ENCODE measurements at regions of chr4 and their contacts with region 1.

Region 1: GRCh38 chr4:97987019-97987648 is 156.1 kb downstream of the STPG2 start:
- DNase-seq: peak; percentile 71
- H3K4me3 ChIP-seq: no peak overlapping the region
- H3K27ac ChIP-seq: no peak overlapping the region
- H3K4me1 ChIP-seq: no peaks in the 10 kb centered on the region
- H3K27me3 ChIP-seq: no peaks in the 10 kb centered on the region
- CTCF ChIP-seq: peak; percentile 33 to 48
- POLR2A ChIP-seq: no peak

Region 2: DNA sequence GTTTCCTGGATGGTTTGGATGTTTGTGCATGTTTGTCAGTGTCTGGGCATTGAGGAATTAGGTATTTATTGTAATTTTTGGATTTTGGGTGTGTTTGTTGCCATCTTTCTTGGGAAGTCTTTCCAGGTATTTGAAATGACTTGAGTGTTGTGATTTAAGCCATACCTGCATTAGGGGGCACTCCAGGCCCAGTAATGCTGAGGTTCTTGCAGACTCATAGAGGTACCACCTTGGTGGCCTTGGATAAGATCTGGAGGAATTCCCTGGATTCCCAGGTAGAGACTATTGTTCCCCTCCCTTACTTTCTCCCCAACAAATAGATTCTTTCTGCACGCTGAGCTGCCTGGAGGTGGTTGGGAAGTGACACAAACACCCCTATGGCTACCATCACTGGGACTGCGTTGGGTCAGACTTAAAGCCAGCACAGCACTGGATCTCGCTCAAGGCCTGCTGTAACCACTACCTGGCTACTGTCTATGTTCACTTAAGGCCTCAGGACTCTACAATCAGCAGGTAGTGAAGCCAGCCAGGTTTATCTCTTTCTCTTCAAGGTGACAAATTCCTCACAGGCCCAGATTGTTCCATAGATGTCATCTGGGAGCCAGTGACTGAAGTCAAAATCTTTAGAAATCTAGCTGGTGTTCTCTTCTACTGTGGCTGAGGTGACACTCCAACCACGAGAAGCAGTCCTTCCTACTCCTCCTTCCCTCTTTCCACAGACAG is 1503.7 kb before region 1 on chr4:
- CTCF ChIA-PET with region 1: interaction called, 5 read pairs
- POLR2A ChIA-PET with region 1: no interaction called
- dilution Hi-C with region 1: no loop called
- intact Hi-C with region 1: loop called (anchors 5 kb)
- DNase-seq: peak; percentile 2
- H3K4me3 ChIP-seq: no peak overlapping the region
- H3K27ac ChIP-seq: no peak overlapping the region
- H3K4me1 ChIP-seq: no peaks in the 10 kb centered on the region
- H3K27me3 ChIP-seq: no peaks in the 10 kb centered on the region
- CTCF ChIP-seq: no peak
- POLR2A ChIP-seq: no peak

Region 3: DNA sequence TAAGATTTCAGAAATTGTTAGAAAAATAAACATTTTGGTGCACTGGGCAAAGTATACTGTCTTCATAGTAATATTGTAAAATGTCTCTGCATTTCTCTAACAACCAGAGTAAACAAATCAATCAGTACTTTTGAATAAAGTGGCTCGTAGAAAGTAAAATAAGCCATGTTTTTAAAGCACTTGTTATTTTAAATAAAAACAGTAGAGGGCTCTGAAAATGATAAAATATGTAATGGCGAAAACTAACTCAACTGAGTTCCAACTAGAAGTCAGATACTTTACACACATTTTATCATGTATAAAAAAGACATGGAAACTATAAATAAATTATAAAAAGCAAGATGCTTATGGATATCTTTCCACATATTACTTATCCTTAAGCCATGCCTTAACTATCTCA is 1012.8 kb before region 1 on chr4:
- CTCF ChIA-PET with region 1: no interaction called
- POLR2A ChIA-PET with region 1: no interaction called
- dilution Hi-C with region 1: no loop called
- intact Hi-C with region 1: loop called (anchors 10 kb)
- DNase-seq: no peak
- H3K4me3 ChIP-seq: no peak overlapping the region
- H3K27ac ChIP-seq: no peak overlapping the region
- H3K4me1 ChIP-seq: no peaks in the 10 kb centered on the region
- H3K27me3 ChIP-seq: no peaks in the 10 kb centered on the region
- CTCF ChIP-seq: no peak
- POLR2A ChIP-seq: no peak

Region 4: GRCh38 chr4:97159648-97160047 is 827.5 kb before region 1 on chr4:
- CTCF ChIA-PET with region 1: interaction called, 8 read pairs
- POLR2A ChIA-PET with region 1: no interaction called
- dilution Hi-C with region 1: no loop called
- intact Hi-C with region 1: loop called (anchors 5 kb)
- DNase-seq: no peak
- H3K4me3 ChIP-seq: no peak overlapping the region
- H3K27ac ChIP-seq: no peak overlapping the region
- H3K4me1 ChIP-seq: no peaks in the 10 kb centered on the region
- H3K27me3 ChIP-seq: no peaks in the 10 kb centered on the region
- CTCF ChIP-seq: no peak
- POLR2A ChIP-seq: no peak

Region 5: GRCh38 chr4:98181809-98182208 is 194.7 kb after region 1 on chr4:
- CTCF ChIA-PET with region 1: no interaction called
- POLR2A ChIA-PET with region 1: no interaction called
- dilution Hi-C with region 1: no loop called
- intact Hi-C with region 1: no loop called
- DNase-seq: no peak
- H3K4me3 ChIP-seq: no peak overlapping the region
- H3K27ac ChIP-seq: no peak overlapping the region
- H3K4me1 ChIP-seq: no peaks in the 10 kb centered on the region
- H3K27me3 ChIP-seq: peaks cover 2 to 4% of the 10 kb centered on the region in 2 experiments
- CTCF ChIP-seq: no peak
- POLR2A ChIP-seq: no peak

Measured in endothelial cell of umbilical vein (primary cell).